A549 (cell line): ENCODE measurements at regions of chr5 and their contacts with region 1.

Region 1: DNA sequence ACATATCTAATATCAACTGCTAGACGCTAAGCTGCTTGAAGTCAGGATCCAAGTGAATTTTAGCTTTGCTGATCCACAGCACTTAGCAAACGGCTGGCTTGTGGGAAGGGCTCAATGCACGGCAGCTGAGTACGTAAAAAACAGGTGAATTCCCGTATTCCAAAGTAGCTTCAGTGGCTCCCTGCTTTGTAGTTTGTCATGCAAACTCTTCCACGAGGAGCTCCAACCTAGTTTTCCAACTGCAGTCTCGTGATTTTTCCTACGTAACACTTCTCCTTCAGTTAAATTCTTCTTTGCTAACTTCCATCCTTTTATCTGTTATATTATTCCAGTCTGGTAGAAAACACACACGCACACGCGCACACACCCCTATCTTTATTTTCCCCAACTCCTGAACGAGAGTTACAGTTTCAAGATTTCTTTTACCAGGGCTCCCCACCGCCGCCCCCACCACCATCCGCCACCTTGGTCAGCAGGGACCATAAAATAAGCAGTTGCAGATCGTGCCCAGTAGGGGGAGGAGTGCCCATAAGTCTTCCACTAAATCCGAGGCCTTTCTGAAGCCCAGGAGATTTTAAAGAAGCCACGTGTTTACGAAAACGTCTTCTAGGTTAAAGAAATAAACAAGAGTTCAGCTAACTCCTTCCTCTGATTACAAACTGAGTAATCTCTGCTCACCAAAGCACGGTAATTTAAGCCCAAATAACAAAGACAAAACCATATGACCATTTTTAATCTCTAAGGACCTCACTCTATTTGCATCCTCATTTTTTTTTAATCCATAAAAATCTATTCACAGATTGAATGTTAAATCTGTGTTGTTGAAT is 34.8 kb upstream of the TRIO start:
- DNase-seq: peak; percentile 74 to 85
- ATAC-seq: peak; percentile 68 to 88; a peak in 4 of 6 replicates
- H3K4me3 ChIP-seq: no peak overlapping the region
- H3K27ac ChIP-seq: peak overlapping the region; percentile 34 to 63; a peak in 5 of 6 replicates
- H3K4me1 ChIP-seq: peaks cover 36% of the 10 kb centered on the region
- CTCF ChIP-seq: peak; percentile 57
- EP300 ChIP-seq: no peak
- POLR2A ChIP-seq: no peak
- RAD21 ChIP-seq: peak; percentile 68 to 76

Region 2: DNA sequence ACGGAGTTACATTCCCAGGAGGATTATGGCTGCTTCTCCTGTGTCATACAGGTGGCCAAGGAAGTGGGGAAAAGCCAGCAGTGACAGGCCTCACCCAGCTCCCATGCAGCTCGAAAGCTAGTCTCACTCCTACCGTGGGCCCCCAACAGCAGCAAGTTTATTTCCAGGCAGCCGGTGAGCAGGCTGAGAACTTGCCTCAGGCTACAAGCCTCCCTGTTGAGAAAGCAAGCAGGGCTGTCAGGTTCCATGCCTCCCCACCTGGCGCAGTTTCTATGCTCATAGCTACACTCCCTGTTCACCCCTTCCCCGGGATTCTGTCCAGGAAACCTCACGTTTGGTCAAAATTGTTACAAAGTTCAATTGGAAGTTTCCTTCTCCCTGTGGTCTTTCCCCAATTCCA is 136.3 kb before region 1 on chr5:
- CTCF ChIA-PET with region 1: no interaction called
- POLR2A ChIA-PET with region 1: no interaction called
- DNase-seq: no peak
- ATAC-seq: no peak
- H3K4me3 ChIP-seq: no peak overlapping the region
- H3K27ac ChIP-seq: no peak overlapping the region
- H3K4me1 ChIP-seq: 0 out of 3 replicates have a peak, but pooled peaks cover 1% of the 10 kb centered on the region
- CTCF ChIP-seq: no peak
- EP300 ChIP-seq: no peak
- POLR2A ChIP-seq: no peak
- RAD21 ChIP-seq: no peak

Region 3: DNA sequence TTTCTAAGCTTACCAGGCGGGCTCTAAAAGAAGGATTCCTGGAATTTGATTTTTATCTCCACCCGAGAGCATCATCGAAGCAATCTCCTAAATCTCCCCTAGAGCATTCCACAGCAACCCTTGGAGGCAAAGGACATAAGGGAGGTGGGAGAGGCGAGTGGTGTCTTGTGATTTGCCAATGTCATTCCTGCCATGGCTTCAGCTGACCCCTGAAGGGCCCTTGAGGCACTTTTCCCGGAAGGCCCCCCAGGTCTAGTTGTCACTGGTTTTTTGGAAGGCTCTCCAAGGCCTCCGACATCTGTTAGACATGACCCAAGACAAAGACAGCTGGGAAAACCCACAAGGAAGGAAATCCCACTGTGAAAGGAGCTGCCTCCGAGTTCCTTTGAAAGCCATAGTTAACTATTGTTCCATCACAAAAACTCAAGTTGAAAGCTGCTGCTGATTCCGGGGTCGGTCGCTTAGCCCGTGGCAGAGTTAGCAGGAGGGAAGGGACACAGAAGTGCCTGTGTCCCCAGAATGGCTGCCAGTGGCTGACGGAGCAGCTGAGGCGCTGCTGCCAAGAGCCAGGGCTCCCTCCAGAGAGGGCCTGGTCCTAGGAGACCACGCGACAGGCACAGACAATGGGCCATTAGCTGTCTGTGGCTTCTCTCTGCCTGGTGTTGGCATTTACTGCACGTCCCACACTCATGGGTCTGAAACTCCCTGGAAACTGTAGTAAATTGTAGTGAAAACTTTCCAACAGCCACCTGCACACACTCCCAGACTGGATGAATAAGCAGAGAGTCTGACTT is 10.3 kb after region 1 on chr5:
- CTCF ChIA-PET with region 1: interaction called, 36 read pairs
- POLR2A ChIA-PET with region 1: no interaction called
- DNase-seq: no peak
- ATAC-seq: no peak; a peak in 1 of 6 replicates
- H3K4me3 ChIP-seq: no peak overlapping the region
- H3K27ac ChIP-seq: no peak overlapping the region
- H3K4me1 ChIP-seq: no peaks in the 10 kb centered on the region
- CTCF ChIP-seq: no peak
- EP300 ChIP-seq: no peak
- POLR2A ChIP-seq: no peak
- RAD21 ChIP-seq: no peak

Region 4: DNA sequence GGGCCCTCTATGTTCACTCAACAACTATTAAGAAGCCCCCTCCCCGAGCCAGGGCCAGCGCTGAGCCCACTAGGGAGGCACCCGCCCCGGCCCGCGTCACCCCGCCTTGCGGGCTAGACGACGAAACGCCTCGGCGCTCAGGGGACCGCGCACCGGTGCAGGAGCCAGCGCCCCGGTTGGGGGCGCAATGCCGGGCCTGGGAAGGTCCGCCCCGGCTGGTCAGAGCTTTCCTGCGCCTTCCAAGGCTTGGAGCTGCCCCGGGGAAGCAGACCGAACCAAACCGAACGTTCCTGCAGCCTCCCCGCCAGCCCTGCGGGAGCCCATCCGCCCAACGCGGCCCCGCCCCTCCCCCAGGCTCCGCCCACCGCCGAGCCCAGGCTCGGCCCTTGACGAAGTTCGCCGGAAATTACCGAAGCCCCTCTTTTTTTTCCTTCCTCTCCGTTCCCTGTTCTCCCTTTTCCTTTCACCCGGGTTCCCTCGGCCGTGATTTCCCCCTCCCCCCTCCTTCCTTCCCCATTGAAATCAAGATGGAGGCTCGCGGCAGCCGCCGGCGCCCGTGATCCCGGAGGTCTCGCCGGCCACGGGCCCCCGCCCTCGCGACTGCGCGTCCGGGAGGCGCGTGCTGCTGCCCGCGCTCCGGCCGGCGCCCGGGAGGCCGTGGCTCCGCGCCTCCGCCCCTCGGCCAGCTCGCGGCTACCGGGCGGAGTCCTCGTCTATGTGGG is 34.6 kb after region 1 on chr5 and contains the start of gene TRIO:
- CTCF ChIA-PET with region 1: interaction called, 12 read pairs
- POLR2A ChIA-PET with region 1: no interaction called
- DNase-seq: peak; percentile 90 to 92
- ATAC-seq: peak; percentile 68 to 80
- H3K4me3 ChIP-seq: peak within 1 kb of the TSS; percentile 97
- H3K27ac ChIP-seq: peak within 1 kb of the TSS; percentile 99 to 100
- H3K4me1 ChIP-seq: peaks cover 33% of the 10 kb centered on the region
- CTCF ChIP-seq: peak; percentile 57
- EP300 ChIP-seq: no peak
- POLR2A ChIP-seq: peak; percentile 45
- RAD21 ChIP-seq: peak; percentile 23 to 73; a peak in 4 of 5 replicates
- polyA plus RNA-seq, gene TRIO: 79.0 and 91.2 TPM in 2 replicates

Region 5: DNA sequence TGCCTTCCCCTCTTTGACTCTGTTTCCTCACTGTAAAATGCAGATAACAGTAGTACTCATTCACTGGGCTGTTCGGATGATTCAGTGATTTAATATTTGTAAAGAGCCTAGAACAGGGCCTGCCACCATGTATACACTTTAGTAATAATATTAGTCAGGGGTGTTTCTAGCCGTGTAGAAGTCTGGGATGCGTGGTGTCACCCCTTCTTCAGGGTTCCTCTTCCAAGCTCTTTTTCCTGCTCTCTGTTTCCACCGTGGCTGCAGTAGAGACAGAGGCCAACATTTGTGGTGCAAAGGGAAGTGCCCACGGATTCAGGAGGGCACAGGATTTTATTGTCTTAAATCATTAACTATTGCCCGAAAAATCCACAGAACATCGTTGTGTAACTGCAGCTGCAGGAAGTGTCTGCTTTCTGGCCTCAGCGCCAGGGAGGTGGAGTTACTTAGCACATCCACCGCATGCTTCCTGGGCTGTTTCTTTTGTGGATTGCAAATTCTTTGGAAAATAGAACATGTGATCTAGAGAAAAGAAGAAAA is 96.5 kb after region 1 on chr5:
- CTCF ChIA-PET with region 1: interaction called, 11 read pairs
- POLR2A ChIA-PET with region 1: no interaction called
- DNase-seq: peak; percentile 49 to 90
- ATAC-seq: peak; percentile 78 to 81
- H3K4me3 ChIP-seq: peak overlapping the region; percentile 23; the same call in 2 of the 3 replicates
- H3K27ac ChIP-seq: peak overlapping the region; percentile 87 to 92
- H3K4me1 ChIP-seq: peaks cover 91% of the 10 kb centered on the region
- CTCF ChIP-seq: no peak
- EP300 ChIP-seq: peak; percentile 16 to 60; a peak in 2 of 5 replicates
- POLR2A ChIP-seq: no peak
- RAD21 ChIP-seq: peak; percentile 25 to 42